ENCODE measurements at regions of chr16 and their contacts with region 1.

Region 1: GRCh38 chr16:81632392-81633146 is 146.5 kb upstream of the PLCG2 start:
- DNase-seq: peak; percentile 98 to 99 (median 99)
- H3K4me3 ChIP-seq: peak overlapping the region in 3 of 7 experiments; percentile 12 to 49 (median 29)
- H3K27ac ChIP-seq: peak overlapping the region; percentile 96 to 98
- H3K4me1 ChIP-seq: peaks cover 23 to 74% (median 71%) of the 10 kb centered on the region in 4 experiments
- H3K27me3 ChIP-seq: no peaks in the 10 kb centered on the region

Region 2: GRCh38 chr16:81551151-81551808 is 81.3 kb before region 1 on chr16:
- CTCF ChIA-PET with region 1: no interaction called
- POLR2A ChIA-PET with region 1: no interaction called
- DNase-seq: peak; percentile 10 to 73 (median 62)
- H3K4me3 ChIP-seq: no peak overlapping the region
- H3K27ac ChIP-seq: no peak overlapping the region
- H3K4me1 ChIP-seq: peaks cover 2 to 61% (median 48%) of the 10 kb centered on the region in 4 experiments
- H3K27me3 ChIP-seq: no peaks in the 10 kb centered on the region

Region 3: GRCh38 chr16:81652798-81653505 is 20.4 kb after region 1 on chr16:
- CTCF ChIA-PET with region 1: interaction called, 10 read pairs
- POLR2A ChIA-PET with region 1: interaction called, 3 read pairs
- DNase-seq: no peak
- H3K4me3 ChIP-seq: no peak overlapping the region
- H3K27ac ChIP-seq: peak overlapping the region in 1 of 2 experiments; percentile 72
- H3K4me1 ChIP-seq: peaks cover 0 to 21% (median 15%) of the 10 kb centered on the region in 4 experiments
- H3K27me3 ChIP-seq: no peaks in the 10 kb centered on the region

Region 4: GRCh38 chr16:81737885-81738786 is 105.6 kb after region 1 on chr16:
- CTCF ChIA-PET with region 1: no interaction called
- POLR2A ChIA-PET with region 1: no interaction called
- DNase-seq: peak; percentile 82 to 89 (median 85)
- H3K4me3 ChIP-seq: peak overlapping the region in 6 of 7 experiments; percentile 10 to 74 (median 55)
- H3K27ac ChIP-seq: peak overlapping the region in 1 of 2 experiments; percentile 8
- H3K4me1 ChIP-seq: peaks cover 15 to 50% (median 37%) of the 10 kb centered on the region in 4 experiments
- H3K27me3 ChIP-seq: no peaks in the 10 kb centered on the region